ENCODE measurements at regions of chr11 and their contacts with region 1.

Region 1: DNA sequence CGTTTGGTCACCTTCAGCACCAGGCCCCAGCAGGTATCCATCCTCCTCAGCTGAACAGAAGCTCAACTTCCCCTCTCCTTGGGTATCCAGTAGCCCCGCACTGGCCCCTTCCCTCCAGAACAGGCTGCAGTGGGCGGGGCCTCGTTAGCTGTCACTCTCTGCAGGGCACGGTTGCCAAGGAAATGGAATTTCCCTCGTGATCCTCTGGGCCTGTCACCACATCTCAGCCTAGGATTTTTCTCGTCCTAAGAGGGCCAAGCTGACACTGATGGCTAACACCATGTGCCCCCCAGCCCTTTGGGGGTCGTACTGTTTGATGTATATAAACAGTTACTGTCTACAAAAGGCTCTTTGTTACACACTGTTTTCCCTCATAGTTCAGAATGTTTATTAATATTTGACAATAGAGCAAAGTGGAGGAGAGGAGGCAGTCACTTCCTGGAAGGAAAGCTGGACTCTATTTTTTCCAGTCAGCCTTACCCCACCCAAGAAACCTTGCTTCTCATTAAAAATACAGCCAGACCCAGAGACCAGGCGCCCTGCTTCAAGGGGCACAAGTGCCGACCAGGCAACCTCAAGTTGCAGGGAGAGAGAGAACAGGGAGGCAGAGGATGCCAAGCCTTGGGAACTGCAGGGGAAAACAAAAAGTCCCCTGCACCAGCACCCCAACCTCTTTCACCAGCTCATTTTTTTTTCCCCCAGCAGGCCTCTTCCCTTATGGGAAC is 44.5 kb downstream of the FEZ1 start:
- DNase-seq: no peak
- ATAC-seq: peak; percentile 72
- H3K4me3 ChIP-seq: no peak overlapping the region
- H3K27ac ChIP-seq: no peak overlapping the region
- H3K4me1 ChIP-seq: peaks cover 8% of the 10 kb centered on the region
- H3K27me3 ChIP-seq: peaks cover 0 to 3% of the 10 kb centered on the region in 2 experiments; a peak in 2 of 5 replicates
- CTCF ChIP-seq: no peak
- EP300 ChIP-seq: no peak
- POLR2A ChIP-seq: no peak
- RAD21 ChIP-seq: no peak

Region 2: DNA sequence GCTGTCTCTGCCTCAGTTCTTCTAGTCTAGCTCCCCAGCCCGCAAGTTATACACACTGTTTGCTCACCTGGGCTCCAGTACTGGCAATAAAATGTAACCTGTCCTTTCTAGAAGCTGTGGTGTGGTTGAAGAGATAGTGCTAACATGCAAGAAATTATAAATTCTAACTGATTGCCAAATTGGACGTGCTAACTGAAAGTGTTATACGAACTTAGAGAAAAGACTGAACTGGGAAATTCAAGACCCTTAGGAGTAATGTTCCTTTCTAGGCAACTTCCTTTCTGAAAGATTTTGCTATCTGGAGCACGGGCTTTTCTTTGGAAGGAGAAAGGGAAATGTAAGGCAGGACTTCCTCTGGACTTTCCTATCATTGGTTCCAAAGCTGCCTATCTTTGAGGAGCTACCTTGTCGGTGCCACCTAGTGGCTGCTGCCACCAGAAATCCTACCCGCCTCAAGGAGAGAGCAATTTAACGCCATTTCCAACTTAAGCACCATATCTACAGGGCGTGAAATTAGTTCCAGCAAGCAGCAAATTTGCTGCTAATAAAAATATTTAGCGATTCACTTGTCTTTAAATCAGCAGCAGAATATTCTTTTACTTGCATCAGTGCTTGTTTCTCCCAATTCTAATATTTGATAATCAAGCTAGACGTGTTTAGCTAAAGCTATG is 327.5 kb before region 1 on chr11:
- CTCF ChIA-PET with region 1: no interaction called
- POLR2A ChIA-PET with region 1: no interaction called
- in situ Hi-C with region 1: no loop called
- intact Hi-C with region 1: no loop called
- DNase-seq: peak; percentile 73
- ATAC-seq: peak; percentile 99
- H3K4me3 ChIP-seq: peak overlapping the region; percentile 48 to 55 (median 53); a peak in 5 of 6 replicates
- H3K27ac ChIP-seq: no peak overlapping the region
- H3K4me1 ChIP-seq: peaks cover 16% of the 10 kb centered on the region
- H3K27me3 ChIP-seq: peaks cover 2 to 19% of the 10 kb centered on the region in 2 experiments; a peak in 2 of 5 replicates
- CTCF ChIP-seq: peak; percentile 75
- EP300 ChIP-seq: no peak
- POLR2A ChIP-seq: no peak
- RAD21 ChIP-seq: no peak

Region 3: DNA sequence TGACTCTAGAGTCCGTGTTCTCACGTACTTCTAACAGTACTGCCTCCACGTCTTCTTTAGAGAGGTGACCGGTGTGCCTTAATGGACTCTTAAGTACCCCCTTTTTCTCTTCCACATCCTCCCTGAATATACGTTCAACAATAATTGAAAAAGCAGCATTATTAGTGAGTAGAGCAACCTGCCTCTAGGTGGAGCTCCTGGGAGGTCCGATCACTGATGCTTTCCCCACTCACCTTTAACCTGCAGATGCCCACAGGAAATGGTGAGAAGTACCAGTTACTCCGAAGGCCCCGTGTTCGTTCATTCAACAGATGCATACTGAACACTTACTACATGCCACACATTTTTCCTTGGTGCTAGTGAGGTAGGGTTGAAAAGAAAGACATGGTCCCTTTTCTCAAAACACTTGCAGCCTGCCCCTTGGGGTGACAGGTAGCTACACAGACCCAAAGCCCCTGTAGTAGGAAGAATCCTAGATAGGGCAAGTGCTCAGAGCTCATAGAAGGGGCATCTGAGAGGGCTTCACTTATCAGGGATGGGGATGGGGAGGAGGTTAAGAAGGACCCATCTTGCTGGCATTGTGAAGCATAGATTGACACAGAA is 28.2 kb before region 1 on chr11:
- CTCF ChIA-PET with region 1: no interaction called
- POLR2A ChIA-PET with region 1: no interaction called
- in situ Hi-C with region 1: no loop called
- intact Hi-C with region 1: loop called (anchors 2 kb)
- DNase-seq: peak; percentile 7
- ATAC-seq: peak; percentile 71
- H3K4me3 ChIP-seq: no peak overlapping the region
- H3K27ac ChIP-seq: no peak overlapping the region
- H3K4me1 ChIP-seq: no peaks in the 10 kb centered on the region
- H3K27me3 ChIP-seq: peaks cover 2 to 50% of the 10 kb centered on the region in 2 experiments; a peak in 4 of 5 replicates
- CTCF ChIP-seq: peak; percentile 58
- EP300 ChIP-seq: no peak
- POLR2A ChIP-seq: no peak
- RAD21 ChIP-seq: no peak